ENCODE measurements at regions of chr12 and their contacts with region 1.

Region 1: GRCh38 chr12:45928309-45928708 is 62.1 kb downstream of the SCAF11 start:
- DNase-seq: no peak
- H3K4me3 ChIP-seq: no peak overlapping the region
- H3K27ac ChIP-seq: peak overlapping the region in 1 of 8 donors; percentile 17
- H3K4me1 ChIP-seq: no peaks in the 10 kb centered on the region
- H3K27me3 ChIP-seq: no peaks in the 10 kb centered on the region
- CTCF ChIP-seq: no peak
- POLR2A ChIP-seq: no peak

Region 2: DNA sequence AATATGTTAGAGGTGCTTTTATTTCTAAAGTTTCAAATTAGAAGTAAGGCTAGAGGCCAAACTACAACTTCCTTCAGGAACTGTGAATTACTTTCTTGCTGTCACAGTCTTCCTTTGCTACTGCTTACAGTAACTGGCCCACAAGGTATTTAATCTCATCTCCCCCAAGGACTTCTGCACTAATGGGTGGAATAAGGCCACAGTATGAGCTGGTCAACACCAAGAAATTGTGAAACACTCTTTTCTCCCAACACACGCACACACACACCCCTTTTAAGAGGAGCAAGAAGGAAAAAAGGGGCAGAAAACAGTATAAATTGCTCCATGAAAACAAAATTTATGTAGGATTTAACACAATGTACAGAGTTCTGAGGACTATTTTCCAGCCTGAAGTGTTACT is 16.5 kb after region 1 on chr12:
- intact Hi-C with region 1: loop called (anchors 2 kb)
- DNase-seq: no peak
- H3K4me3 ChIP-seq: no peak overlapping the region
- H3K27ac ChIP-seq: no peak overlapping the region
- H3K4me1 ChIP-seq: peaks cover 0 to 7% (median 0%) of the 10 kb centered on the region in 6 donors
- H3K27me3 ChIP-seq: no peaks in the 10 kb centered on the region
- CTCF ChIP-seq: no peak
- POLR2A ChIP-seq: no peak

Region 3: GRCh38 chr12:46357438-46358324 is 429.4 kb after region 1 on chr12:
- intact Hi-C with region 1: no loop called
- DNase-seq: no peak
- H3K4me3 ChIP-seq: no peak overlapping the region
- H3K27ac ChIP-seq: peak overlapping the region in 1 of 8 donors; percentile 10
- H3K4me1 ChIP-seq: peaks cover 11 to 46% (median 24%) of the 10 kb centered on the region in 6 donors
- H3K27me3 ChIP-seq: no peaks in the 10 kb centered on the region
- CTCF ChIP-seq: no peak
- POLR2A ChIP-seq: no peak

Region 4: GRCh38 chr12:46650607-46651088 is 722.3 kb after region 1 on chr12:
- intact Hi-C with region 1: no loop called
- DNase-seq: no peak
- H3K4me3 ChIP-seq: no peak overlapping the region
- H3K27ac ChIP-seq: no peak overlapping the region
- H3K4me1 ChIP-seq: no peaks in the 10 kb centered on the region
- H3K27me3 ChIP-seq: no peaks in the 10 kb centered on the region
- CTCF ChIP-seq: no peak
- POLR2A ChIP-seq: no peak

Measured in spleen (tissue), 13 donors.